Activated CD8-positive, alpha-beta T cell treated with anti-CD3 and anti-CD28 coated beads, Interleukin-2, amount 10 ng/mL, durations not matched to agents 7 days and 5 days (primary cell): ENCODE measurements at regions of chr17 and their contacts with region 1.

Region 1: DNA sequence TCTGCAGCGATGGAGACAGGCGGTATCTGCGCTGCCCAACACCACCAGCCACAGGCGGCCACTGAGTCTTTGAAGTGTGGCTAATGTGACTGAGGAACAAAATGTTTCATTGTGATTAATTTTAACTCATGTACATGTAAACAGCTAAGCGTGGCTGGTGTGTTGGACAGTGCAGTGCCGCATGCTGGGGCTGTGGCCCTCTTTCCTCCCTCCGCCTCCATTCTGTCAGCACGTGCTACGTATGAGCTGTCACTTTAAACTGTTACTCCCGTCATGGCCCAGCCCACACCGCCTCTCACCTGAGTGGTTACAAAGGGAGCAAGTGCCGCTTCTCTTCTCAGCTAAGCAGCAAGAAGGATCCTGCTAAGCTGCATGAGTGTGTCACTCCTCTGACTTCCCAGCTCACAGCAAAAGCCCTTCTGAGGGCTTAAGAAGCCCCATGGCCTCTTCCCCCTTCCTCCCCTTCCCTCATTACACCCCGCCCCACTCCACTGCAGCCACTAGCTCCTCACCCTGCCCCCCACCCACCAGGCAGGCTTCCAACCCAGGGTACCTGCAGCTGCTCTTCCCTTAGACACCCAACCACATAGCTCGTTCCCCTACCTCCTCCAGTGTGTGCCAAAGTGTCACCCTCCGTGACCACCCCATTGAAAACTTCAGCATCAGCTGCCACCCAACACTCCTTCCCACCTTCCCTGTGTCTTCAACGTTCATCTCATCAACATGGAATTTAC is 15.0 kb downstream of the HASPIN start:
- DNase-seq: peak; percentile 73
- ATAC-seq: peak; percentile 71
- H3K4me3 Mint-ChIP-seq: no peak overlapping the region
- H3K27ac Mint-ChIP-seq: peak overlapping the region; percentile 69
- H3K4me1 Mint-ChIP-seq: peaks cover 50% of the 10 kb centered on the region
- H3K27me3 Mint-ChIP-seq: peaks cover 4% of the 10 kb centered on the region

Region 2: GRCh38 chr17:3750926-3751325 is 12.2 kb after region 1 on chr17:
- CTCF ChIA-PET with region 1: interaction called, 34 read pairs
- POLR2A ChIA-PET with region 1: no interaction called
- DNase-seq: peak; percentile 83
- ATAC-seq: peak; percentile 87
- H3K4me3 Mint-ChIP-seq: peak overlapping the region; percentile 54
- H3K27ac Mint-ChIP-seq: peak overlapping the region; percentile 86
- H3K4me1 Mint-ChIP-seq: peaks cover 55% of the 10 kb centered on the region
- H3K27me3 Mint-ChIP-seq: peaks cover 5% of the 10 kb centered on the region

Region 3: GRCh38 chr17:3780986-3781385 is 42.3 kb after region 1 on chr17:
- CTCF ChIA-PET with region 1: interaction called, 12 read pairs
- POLR2A ChIA-PET with region 1: no interaction called
- DNase-seq: no peak
- ATAC-seq: no peak
- H3K4me3 Mint-ChIP-seq: no peak overlapping the region
- H3K27ac Mint-ChIP-seq: no peak overlapping the region
- H3K4me1 Mint-ChIP-seq: peaks cover 8% of the 10 kb centered on the region
- H3K27me3 Mint-ChIP-seq: peaks cover 8% of the 10 kb centered on the region

Region 4: GRCh38 chr17:3812771-3813170 is 74.0 kb after region 1 on chr17:
- CTCF ChIA-PET with region 1: interaction called, 36 read pairs
- POLR2A ChIA-PET with region 1: interaction called, 4 read pairs
- DNase-seq: no peak
- ATAC-seq: no peak
- H3K4me3 Mint-ChIP-seq: no peak overlapping the region
- H3K27ac Mint-ChIP-seq: no peak overlapping the region
- H3K4me1 Mint-ChIP-seq: peaks cover 11% of the 10 kb centered on the region
- H3K27me3 Mint-ChIP-seq: no peaks in the 10 kb centered on the region

Region 5: GRCh38 chr17:3835410-3836229 is 96.9 kb after region 1 on chr17:
- CTCF ChIA-PET with region 1: interaction called, 456 read pairs
- POLR2A ChIA-PET with region 1: no interaction called
- DNase-seq: no peak
- ATAC-seq: no peak
- H3K4me3 Mint-ChIP-seq: no peak overlapping the region
- H3K27ac Mint-ChIP-seq: no peak overlapping the region
- H3K4me1 Mint-ChIP-seq: peaks cover 1% of the 10 kb centered on the region
- H3K27me3 Mint-ChIP-seq: no peaks in the 10 kb centered on the region

Region 6: DNA sequence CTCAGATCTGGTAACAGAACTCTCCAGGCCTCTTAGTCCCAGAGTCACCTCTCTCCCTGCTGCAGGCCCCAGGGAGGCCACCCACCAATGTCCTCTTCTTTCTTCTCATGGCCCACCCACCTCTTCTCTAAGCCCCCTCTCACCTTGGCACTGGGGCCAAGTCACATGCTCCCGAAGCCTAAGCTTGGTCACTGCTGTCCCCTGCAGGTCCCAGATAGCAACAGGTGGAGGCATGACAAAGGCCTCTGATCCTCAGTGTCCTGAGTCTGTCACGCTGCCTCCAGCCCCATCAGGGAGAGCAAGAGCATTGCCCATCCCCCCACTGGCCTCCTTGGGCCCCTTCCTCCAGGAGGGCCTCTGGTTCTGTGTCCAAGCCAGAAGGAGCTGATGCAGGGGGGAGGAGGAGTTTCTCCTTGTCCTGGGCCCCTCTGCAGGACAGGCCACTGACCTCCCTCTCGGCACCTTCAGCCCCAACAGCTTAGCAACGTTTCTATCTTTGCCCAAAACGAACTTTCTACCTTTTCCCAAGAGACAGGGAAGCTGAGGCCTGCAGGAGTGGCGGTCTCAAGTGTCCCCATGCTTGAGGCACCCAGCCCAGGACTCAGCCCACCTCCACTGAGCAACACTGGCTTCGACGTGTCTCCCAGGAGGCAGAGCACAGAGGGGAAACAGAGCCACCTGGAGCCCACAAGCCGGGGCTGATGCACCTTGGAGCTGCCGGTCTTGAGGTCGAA is 168.9 kb after region 1 on chr17:
- CTCF ChIA-PET with region 1: interaction called, 21 read pairs
- POLR2A ChIA-PET with region 1: no interaction called
- DNase-seq: no peak
- ATAC-seq: no peak
- H3K4me3 Mint-ChIP-seq: no peak overlapping the region
- H3K27ac Mint-ChIP-seq: no peak overlapping the region
- H3K4me1 Mint-ChIP-seq: peaks cover 21% of the 10 kb centered on the region
- H3K27me3 Mint-ChIP-seq: no peaks in the 10 kb centered on the region